ENCODE measurements at regions of chr1 and their contacts with region 1.

Region 1: GRCh38 chr1:145927063-145927886 is at the start of gene RBM8A:
- DNase-seq: peak; percentile 85 to 99 (median 94)
- ATAC-seq: peak; percentile 96
- H3K4me3 ChIP-seq: peak within 1 kb of the TSS; percentile 86 to 91
- H3K4me3 Mint-ChIP-seq: no peak within 1 kb of the TSS
- H3K27ac ChIP-seq: peak within 1 kb of the TSS; percentile 89 to 95
- H3K27ac Mint-ChIP-seq: peak within 1 kb of the TSS; percentile 91
- H3K4me1 ChIP-seq: peaks cover 22% of the 10 kb centered on the region
- H3K4me1 Mint-ChIP-seq: peaks cover 20% of the 10 kb centered on the region
- H3K27me3 ChIP-seq: no peaks in the 10 kb centered on the region
- H3K27me3 Mint-ChIP-seq: no peaks in the 10 kb centered on the region
- CTCF ChIP-seq: peak; percentile 60
- total RNA-seq, gene RBM8A: 180 to 187 TPM

Region 2: GRCh38 chr1:146012737-146013403 is 85.6 kb after region 1 on chr1:
- CTCF ChIA-PET with region 1: interaction called, 5 read pairs
- POLR2A ChIA-PET with region 1: interaction called, 3 read pairs
- intact Hi-C with region 1: loop called in 1 of 2 experiments (anchors 5 kb)
- DNase-seq: peak; percentile 31 to 86 (median 61)
- ATAC-seq: peak; percentile 87
- H3K4me3 ChIP-seq: no peak overlapping the region
- H3K4me3 Mint-ChIP-seq: no peak overlapping the region
- H3K27ac ChIP-seq: no peak overlapping the region
- H3K27ac Mint-ChIP-seq: no peak overlapping the region
- H3K4me1 ChIP-seq: peaks cover 1% of the 10 kb centered on the region
- H3K4me1 Mint-ChIP-seq: peaks cover 4% of the 10 kb centered on the region
- H3K27me3 ChIP-seq: no peaks in the 10 kb centered on the region
- H3K27me3 Mint-ChIP-seq: peaks cover 3% of the 10 kb centered on the region
- CTCF ChIP-seq: peak; percentile 97